ENCODE measurements at regions of chr12 and their contacts with region 1.

Region 1: DNA sequence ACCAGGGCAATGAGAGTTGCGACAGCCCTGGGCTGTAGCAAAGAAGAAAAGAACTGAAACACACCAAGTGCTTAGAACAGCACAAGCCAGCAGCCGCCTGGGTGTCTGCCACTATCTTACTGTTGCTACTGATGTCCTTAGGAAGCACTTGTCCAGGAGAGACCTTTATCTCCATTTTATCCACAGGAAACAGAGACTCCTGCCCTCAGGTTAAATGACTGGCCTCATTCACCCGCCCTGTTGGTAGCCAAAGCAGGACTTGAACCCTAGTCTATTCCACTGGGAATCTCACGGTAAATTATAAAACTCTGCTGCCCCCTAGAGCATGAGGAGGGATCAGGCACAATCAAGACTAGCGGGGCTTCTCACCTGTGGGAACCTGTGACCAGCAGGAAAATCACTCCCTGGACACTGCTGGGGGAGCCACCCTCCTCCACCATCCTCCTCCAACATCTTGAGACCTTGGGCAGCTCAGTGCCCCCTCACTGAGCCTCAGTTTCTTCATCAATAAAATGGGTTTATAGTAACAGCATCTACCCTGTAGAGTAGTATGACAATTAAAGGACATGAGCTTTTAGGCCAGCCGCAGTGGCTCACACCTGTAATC is 20.5 kb upstream of the TESC start:
- DNase-seq: peak; percentile 55
- ATAC-seq: peak; percentile 47

Region 2: DNA sequence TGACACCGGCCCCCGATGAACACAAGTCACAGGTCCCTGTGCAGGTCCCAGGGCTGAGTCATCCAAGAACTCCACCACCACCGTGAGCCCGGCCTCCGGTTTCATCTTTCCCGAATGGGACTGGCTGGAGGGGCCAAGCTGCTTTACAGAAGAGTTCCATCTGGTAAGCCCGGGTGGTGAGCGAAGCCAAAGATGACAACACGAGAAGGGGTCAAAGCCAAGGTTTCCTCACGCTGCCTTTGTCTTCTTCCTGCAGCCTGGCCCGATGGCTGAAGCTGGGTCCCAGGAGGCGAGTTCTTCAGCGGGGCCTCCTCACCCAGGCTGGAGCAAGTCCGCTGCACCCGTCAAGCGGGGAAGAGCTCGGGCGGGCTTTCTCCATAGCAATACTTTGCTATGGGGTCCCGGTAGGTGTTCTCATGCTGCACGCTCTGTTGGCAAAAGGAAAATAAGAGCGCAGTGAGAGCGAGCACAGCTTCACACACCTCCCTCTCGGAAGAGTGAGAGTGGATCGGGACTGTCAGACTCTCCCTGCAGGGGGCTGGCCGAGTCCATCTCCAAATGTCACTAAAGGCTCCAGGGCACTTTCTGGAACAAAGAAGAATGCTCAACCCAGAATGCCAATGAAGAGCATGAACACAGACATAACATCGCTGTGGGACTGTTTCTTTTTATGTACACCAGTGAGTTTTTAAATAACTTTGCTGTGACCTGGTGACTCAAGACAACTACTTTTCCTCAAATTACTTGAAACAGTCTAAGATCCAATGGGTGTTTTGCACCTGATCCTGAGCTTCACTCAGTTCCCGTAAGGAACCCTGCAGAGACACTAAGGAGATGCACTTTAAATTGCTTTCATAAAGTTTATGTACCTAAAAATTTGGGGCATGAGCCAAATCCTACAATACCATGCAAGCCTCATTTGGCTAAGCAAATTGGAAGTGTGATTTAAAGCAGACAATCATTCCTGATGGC is 401.9 kb before region 1 on chr12:
- intact Hi-C with region 1: loop called (anchors 10 kb)
- DNase-seq: peak; percentile 81
- ATAC-seq: peak; percentile 85

Region 3: GRCh38 chr12:117025481-117026151 is 94.1 kb before region 1 on chr12:
- intact Hi-C with region 1: loop called (anchors 5 kb)
- DNase-seq: peak; percentile 75
- ATAC-seq: peak; percentile 87

Region 4: GRCh38 chr12:117273091-117273490 is 153.4 kb after region 1 on chr12:
- intact Hi-C with region 1: no loop called
- DNase-seq: no peak
- ATAC-seq: peak; percentile 90

Region 5: GRCh38 chr12:117494833-117495655 is 375.3 kb after region 1 on chr12:
- intact Hi-C with region 1: no loop called
- DNase-seq: no peak
- ATAC-seq: no peak